ENCODE measurements at regions of chr12 and their contacts with region 1.

Region 1: DNA sequence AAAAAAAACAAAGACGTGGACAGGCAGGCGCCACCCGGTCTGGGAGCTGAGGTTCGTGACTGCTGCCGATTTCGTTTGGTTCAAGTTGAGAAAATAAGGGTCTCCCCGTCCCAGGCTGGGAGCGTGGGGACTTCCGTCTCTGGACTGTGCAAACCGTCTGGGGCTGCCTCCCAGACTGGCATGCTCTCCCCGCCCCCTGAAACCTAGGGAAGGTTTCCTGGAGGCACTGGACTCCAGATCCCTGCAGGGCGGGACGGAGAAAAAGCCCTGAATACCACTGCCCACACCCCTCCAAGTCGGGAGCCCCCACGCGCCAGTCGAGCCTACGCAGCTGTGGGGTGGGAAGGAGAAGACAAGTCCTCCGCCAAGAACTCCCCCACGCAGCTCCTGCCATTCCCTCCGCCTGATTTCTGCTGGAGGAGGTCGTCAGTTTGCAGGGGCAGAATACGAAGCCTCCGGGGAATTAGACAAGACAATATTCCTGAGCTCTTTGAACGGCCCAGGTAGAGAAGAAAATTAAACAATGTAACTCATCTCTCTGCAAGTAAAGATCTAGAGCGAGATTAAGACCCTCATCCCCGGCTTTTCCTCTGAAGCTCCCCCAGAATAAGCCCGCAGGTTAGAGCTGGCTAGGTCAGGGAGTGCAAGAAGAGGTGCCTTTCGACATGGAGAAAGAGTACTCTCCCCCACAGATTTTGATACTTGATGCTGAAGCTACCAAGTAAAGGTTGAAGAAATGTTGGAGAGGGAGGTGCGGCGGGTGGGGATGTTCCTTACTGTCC is 10.4 kb upstream of the HOXC13 start:
- H3K4me3 ChIP-seq: peak overlapping the region; percentile 23
- H3K27ac ChIP-seq: no peak overlapping the region
- H3K4me1 ChIP-seq: no peaks in the 10 kb centered on the region
- CTCF ChIP-seq: no peak

Region 2: GRCh38 chr12:53938326-53939140 is 10.3 kb after region 1 on chr12 and contains the start of gene HOXC13:
- CTCF ChIA-PET with region 1: no interaction called
- POLR2A ChIA-PET with region 1: interaction called, 12 read pairs
- H3K4me3 ChIP-seq: peak within 1 kb of the TSS; percentile 63
- H3K27ac ChIP-seq: peak within 1 kb of the TSS; percentile 94
- H3K4me1 ChIP-seq: peaks cover 6% of the 10 kb centered on the region; the same call in 1 of the 2 replicates
- CTCF ChIP-seq: no peak

Measured in HEK293 (cell line).